ENCODE measurements at regions of chr15 and their contacts with region 1.

Region 1: DNA sequence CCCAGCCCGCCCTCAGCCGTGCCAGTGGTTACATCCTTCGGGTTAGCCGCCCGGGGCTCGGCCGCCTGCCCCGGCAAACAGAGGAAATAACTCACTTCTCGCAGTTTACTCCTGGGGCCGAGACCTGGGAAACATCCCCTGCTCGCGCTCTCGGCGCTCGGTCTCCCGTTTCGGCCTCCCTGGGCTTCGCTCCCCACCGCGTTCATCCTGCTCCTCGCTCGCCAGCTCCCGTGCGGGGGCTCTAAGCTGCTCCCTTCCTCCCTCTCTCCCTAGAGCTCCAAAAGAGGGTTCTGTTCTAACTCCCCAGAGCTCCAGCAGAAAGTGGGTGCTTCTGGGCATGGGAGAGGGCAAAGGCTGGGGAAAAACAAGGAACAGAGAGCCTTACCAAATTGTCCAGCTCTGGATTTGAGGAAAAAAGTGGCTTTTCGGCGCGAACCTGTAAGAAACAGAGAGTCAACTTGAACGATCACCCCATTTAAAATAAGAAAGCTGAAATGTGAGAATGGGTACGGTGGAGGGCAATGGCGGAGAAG is 5.1 kb downstream of the MEIS2 start:
- DNase-seq: no peak
- H3K4me3 ChIP-seq: peak overlapping the region; percentile 2; the same call in 1 of the 2 replicates
- H3K27me3 ChIP-seq: no peaks in the 10 kb centered on the region
- CTCF ChIP-seq: no peak

Region 2: DNA sequence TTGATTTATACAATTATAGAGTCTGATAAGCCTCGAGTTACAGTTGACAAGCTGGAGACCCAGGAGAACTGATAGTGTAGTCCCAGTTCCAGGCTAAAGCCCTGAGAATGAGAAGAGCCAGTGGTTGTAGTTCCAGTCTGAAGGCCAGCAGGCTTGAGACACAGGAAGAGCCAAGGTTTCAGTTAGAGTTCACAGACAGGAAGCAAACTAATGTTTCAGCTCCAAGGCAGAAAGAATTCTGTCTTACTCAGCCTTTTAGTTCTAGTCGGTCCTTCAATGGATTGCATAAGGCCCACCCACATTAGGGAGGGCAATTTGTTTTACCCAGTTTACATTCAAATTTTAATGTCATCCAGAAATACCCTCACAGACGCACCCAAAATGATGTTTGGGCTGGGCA is 413.1 kb before region 1 on chr15:
- CTCF ChIA-PET with region 1: no interaction called
- POLR2A ChIA-PET with region 1: interaction called, 14 read pairs
- DNase-seq: no peak
- H3K4me3 ChIP-seq: no peak overlapping the region
- H3K27me3 ChIP-seq: no peaks in the 10 kb centered on the region
- CTCF ChIP-seq: no peak